HepG2 (cell line): ENCODE measurements at regions of chr4 and their contacts with region 1.

Region 1: DNA sequence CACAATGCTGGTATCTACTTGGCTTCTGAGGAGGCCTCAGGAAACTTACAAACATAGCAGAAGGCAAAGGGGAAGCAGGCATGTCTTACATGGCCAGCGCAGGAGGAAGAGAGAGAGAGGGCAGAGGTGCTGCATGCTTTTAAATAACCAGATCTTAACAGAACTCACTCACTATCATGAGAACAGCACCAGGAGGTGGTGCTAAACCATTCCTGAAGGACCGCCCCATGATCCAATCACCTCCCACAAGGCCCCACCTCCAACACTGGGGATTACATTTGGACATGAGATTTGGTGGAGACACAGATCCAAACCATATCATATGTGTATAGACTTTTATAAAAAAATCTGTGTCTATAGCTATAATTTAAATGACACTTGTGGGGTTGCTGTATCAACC is 48.6 kb upstream of the ERVMER34-1 start:
- DNase-seq: peak; percentile 5
- ATAC-seq: peak; percentile 35; the same call in 1 of the 3 replicates
- H3K4me3 ChIP-seq: no peak overlapping the region
- H3K27ac ChIP-seq: no peak overlapping the region
- H3K4me1 ChIP-seq: no peaks in the 10 kb centered on the region
- H3K27me3 ChIP-seq: no peaks in the 10 kb centered on the region; a peak in 1 of 5 replicates
- CTCF ChIP-seq: no peak
- EP300 ChIP-seq: no peak
- POLR2A ChIP-seq: no peak
- RAD21 ChIP-seq: no peak

Region 2: DNA sequence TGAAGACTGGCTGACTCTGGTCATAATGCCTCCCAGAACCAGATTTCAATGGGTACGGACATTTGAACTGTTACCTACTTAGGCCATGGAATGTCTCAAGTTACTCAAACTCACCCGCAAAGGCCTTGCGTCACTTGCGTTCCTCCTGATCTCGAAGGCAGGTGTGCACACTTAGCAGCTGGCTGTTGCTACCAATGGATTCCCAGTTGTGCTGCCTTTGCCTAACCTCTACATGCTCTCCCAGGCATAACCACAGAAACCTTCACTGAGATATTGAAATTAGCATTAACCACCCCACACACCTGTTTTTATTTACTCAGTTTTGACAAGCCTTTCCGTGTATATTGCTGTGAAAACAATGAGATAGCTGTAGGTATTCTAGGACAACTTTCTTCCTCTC is 51.4 kb before region 1 on chr4:
- CTCF ChIA-PET with region 1: no interaction called
- POLR2A ChIA-PET with region 1: no interaction called
- in situ Hi-C with region 1: no loop called
- intact Hi-C with region 1: no loop called
- DNase-seq: no peak
- ATAC-seq: no peak
- H3K4me3 ChIP-seq: no peak overlapping the region
- H3K27ac ChIP-seq: no peak overlapping the region
- H3K4me1 ChIP-seq: 0 out of 2 replicates have a peak, but pooled peaks cover 6% of the 10 kb centered on the region
- H3K27me3 ChIP-seq: peaks cover 3 to 15% of the 10 kb centered on the region in 2 experiments; a peak in 4 of 5 replicates
- CTCF ChIP-seq: no peak
- EP300 ChIP-seq: no peak
- POLR2A ChIP-seq: no peak
- RAD21 ChIP-seq: no peak

Region 3: DNA sequence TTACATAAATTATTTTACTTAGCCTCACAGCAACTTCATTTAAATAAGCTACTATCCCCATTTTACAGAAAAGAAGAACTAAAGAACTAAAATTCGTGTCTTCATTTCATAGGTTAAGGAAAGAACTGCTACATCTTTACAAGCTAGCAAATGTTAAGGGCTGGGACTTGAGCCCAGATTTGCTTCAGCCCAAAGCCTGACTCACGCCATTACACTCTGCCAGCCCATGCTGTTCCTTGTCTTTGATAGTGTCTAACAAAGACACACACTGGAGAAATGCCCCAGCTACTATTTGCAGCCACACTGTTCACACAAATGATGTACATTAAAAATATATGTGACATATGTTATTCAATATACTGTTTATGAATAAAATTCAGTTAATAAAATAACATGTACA is 19.6 kb before region 1 on chr4:
- CTCF ChIA-PET with region 1: no interaction called
- POLR2A ChIA-PET with region 1: no interaction called
- in situ Hi-C with region 1: no loop called
- intact Hi-C with region 1: no loop called
- DNase-seq: no peak
- ATAC-seq: no peak
- H3K4me3 ChIP-seq: no peak overlapping the region
- H3K27ac ChIP-seq: no peak overlapping the region
- H3K4me1 ChIP-seq: no peaks in the 10 kb centered on the region
- H3K27me3 ChIP-seq: no peaks in the 10 kb centered on the region
- CTCF ChIP-seq: no peak
- EP300 ChIP-seq: no peak
- POLR2A ChIP-seq: no peak
- RAD21 ChIP-seq: no peak

Region 4: DNA sequence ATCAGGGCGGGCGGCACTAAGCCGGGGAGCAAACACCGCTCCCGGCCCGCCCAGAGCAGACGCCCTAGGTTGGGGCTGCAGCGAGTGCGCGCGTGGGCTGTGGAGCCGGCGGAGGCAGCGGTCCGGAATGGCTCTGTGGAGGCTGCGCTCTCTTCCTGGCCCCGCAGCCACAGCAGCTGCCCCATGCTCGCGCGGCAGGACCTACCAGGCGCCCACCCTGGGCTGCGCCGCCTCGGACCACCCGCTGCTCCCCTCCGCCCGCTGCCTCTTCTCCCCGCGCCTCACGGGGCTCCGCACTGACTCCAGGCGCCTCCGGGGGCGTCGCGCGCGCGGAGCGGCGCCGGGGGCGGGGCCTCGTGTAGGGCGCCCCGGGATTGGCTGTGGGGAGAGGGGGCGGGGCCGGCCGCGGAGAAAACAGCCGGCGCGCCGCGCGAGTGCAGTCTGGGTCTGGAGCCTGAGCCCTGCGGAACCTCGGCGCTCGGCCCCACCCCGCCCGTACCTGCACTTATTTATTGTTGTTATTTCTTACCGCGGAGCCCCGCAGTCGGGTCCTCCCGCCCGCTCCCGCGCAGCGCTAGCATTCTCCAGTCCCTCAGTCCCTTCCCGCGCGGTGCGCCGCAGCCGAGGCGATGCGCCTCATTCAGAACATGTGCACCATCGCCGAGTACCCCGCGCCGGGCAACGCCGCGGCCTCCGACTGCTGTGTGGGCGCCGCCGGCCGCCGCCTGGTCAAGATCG is 62.2 kb after region 1 on chr4 and contains the start of gene RASL11B:
- CTCF ChIA-PET with region 1: no interaction called
- POLR2A ChIA-PET with region 1: no interaction called
- in situ Hi-C with region 1: no loop called
- intact Hi-C with region 1: loop called (anchors 2 kb)
- DNase-seq: peak; percentile 20
- ATAC-seq: peak; percentile 98
- H3K4me3 ChIP-seq: peak within 1 kb of the TSS; percentile 36 to 70 (median 63); a peak in 5 of 6 replicates
- H3K27ac ChIP-seq: no peak within 1 kb of the TSS
- H3K4me1 ChIP-seq: 0 out of 2 replicates have a peak, but pooled peaks cover 4% of the 10 kb centered on the region
- H3K27me3 ChIP-seq: peaks cover 3 to 6% of the 10 kb centered on the region in 2 experiments; a peak in 2 of 5 replicates
- CTCF ChIP-seq: peak; percentile 14; the same call in 1 of the 2 replicates
- EP300 ChIP-seq: no peak
- POLR2A ChIP-seq: 0 out of 4 replicates have a peak, but pooled peaks of 1 of the 2 experiments have one; percentile 38
- RAD21 ChIP-seq: no peak; the same call in 1 of the 2 replicates
- total RNA-seq, gene RASL11B: 0.07 TPM in 1 of 2 replicates, not detected in the other

Region 5: DNA sequence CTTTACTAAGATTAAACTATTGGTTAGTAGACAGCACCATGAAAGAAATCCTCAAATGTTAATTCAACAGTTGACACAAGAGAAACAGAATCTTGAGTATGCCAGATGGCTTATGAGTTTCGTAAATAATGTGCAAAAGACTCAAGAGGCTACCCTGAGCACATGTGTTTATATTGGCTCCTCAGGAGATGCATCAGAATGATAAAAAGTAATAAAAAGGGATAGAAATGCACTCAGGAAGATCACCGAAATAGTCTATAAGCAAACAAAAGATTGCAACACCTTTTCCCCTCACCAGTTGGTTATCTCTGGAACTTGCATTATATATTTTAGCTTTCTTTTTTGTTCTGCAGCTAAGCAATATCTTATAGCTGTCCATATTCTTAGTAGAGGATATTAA is 481.6 kb after region 1 on chr4:
- CTCF ChIA-PET with region 1: no interaction called
- POLR2A ChIA-PET with region 1: no interaction called
- in situ Hi-C with region 1: no loop called
- intact Hi-C with region 1: no loop called
- DNase-seq: no peak
- ATAC-seq: no peak
- H3K4me3 ChIP-seq: no peak overlapping the region
- H3K27ac ChIP-seq: no peak overlapping the region
- H3K4me1 ChIP-seq: no peaks in the 10 kb centered on the region
- H3K27me3 ChIP-seq: no peaks in the 10 kb centered on the region
- CTCF ChIP-seq: no peak
- EP300 ChIP-seq: no peak
- POLR2A ChIP-seq: no peak
- RAD21 ChIP-seq: no peak

Region 6: GRCh38 chr4:53551958-53552357 is 752.1 kb after region 1 on chr4:
- CTCF ChIA-PET with region 1: no interaction called
- POLR2A ChIA-PET with region 1: no interaction called
- in situ Hi-C with region 1: no loop called
- intact Hi-C with region 1: loop called (anchors 5 kb)
- DNase-seq: no peak
- ATAC-seq: no peak
- H3K4me3 ChIP-seq: no peak overlapping the region
- H3K27ac ChIP-seq: no peak overlapping the region
- H3K4me1 ChIP-seq: no peaks in the 10 kb centered on the region
- H3K27me3 ChIP-seq: no peaks in the 10 kb centered on the region
- CTCF ChIP-seq: no peak
- EP300 ChIP-seq: no peak
- POLR2A ChIP-seq: no peak
- RAD21 ChIP-seq: no peak